Common myeloid progenitor, CD34-positive (primary cell): ENCODE measurements at regions of chr14 and their contacts with region 1.

Region 1: DNA sequence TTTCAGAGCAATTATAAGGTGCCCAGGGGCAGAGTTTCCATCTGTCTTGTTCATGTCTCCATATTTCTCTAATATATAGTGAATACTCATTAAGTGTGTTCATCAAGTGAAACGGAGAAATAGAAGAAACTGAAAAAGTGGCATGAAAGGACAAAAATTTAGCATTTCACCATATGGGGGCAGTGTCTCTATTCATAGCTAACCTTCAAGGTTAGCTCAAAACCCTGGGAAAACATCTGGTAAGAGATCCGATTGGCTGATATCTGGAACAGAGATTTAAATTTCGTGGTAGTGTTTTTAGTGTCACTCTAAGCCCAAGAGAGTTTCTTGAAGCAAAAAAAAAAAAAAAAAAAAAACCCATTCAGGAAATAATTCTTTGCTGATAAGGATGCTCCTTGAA is 367.5 kb downstream of the DAD1 start:
- DNase-seq: peak; percentile 56 to 80 (median 77)
- H3K4me3 ChIP-seq: no peak overlapping the region
- H3K27ac ChIP-seq: no peak overlapping the region
- H3K4me1 ChIP-seq: peaks cover 2 to 17% (median 7%) of the 10 kb centered on the region in 4 experiments
- H3K27me3 ChIP-seq: no peaks in the 10 kb centered on the region

Region 2: GRCh38 chr14:21933681-21934080 is 287.8 kb before region 1 on chr14:
- CTCF ChIA-PET with region 1: no interaction called
- POLR2A ChIA-PET with region 1: no interaction called
- DNase-seq: peak; percentile 43 to 56 (median 49)
- H3K4me3 ChIP-seq: no peak overlapping the region
- H3K27ac ChIP-seq: no peak overlapping the region
- H3K4me1 ChIP-seq: peaks cover 0 to 13% (median 5%) of the 10 kb centered on the region in 4 experiments
- H3K27me3 ChIP-seq: no peaks in the 10 kb centered on the region

Region 3: DNA sequence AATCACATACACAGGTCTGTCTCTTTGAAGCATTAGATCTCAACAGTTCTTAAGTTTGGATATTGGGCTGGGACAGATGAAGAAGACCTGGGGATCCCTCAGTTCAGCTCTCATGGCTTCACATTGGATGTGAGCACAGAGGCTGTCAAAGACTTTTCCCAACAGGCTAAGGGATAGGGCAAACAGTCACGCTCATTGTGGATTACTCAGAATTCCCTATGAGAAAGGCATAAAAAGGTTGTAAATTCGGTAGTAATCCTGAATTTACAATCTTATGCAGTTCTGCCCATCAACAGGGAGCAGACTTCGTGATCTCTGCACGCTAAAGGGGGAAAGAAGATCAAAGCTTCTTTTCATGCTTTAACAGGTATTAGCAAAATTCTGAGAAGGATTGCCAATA is 80.9 kb before region 1 on chr14:
- CTCF ChIA-PET with region 1: no interaction called
- POLR2A ChIA-PET with region 1: no interaction called
- DNase-seq: no peak
- H3K4me3 ChIP-seq: no peak overlapping the region
- H3K27ac ChIP-seq: no peak overlapping the region
- H3K4me1 ChIP-seq: no peaks in the 10 kb centered on the region
- H3K27me3 ChIP-seq: peaks cover 0 to 1% (median 0%) of the 10 kb centered on the region in 5 experiments

Region 4: GRCh38 chr14:22210906-22211305 is 10.6 kb before region 1 on chr14:
- CTCF ChIA-PET with region 1: interaction called, 13 read pairs
- POLR2A ChIA-PET with region 1: no interaction called
- DNase-seq: no peak
- H3K4me3 ChIP-seq: no peak overlapping the region
- H3K27ac ChIP-seq: no peak overlapping the region
- H3K4me1 ChIP-seq: no peaks in the 10 kb centered on the region
- H3K27me3 ChIP-seq: peaks cover 0 to 1% (median 0%) of the 10 kb centered on the region in 5 experiments

Region 5: GRCh38 chr14:22265319-22266137 is 44.0 kb after region 1 on chr14:
- CTCF ChIA-PET with region 1: interaction called, 23 read pairs
- POLR2A ChIA-PET with region 1: interaction called, 3 read pairs
- DNase-seq: peak; percentile 41 to 62 (median 60)
- H3K4me3 ChIP-seq: peak overlapping the region in 1 of 7 experiments; percentile 3
- H3K27ac ChIP-seq: no peak overlapping the region
- H3K4me1 ChIP-seq: peaks cover 3 to 19% (median 7%) of the 10 kb centered on the region in 4 experiments
- H3K27me3 ChIP-seq: no peaks in the 10 kb centered on the region

Region 6: DNA sequence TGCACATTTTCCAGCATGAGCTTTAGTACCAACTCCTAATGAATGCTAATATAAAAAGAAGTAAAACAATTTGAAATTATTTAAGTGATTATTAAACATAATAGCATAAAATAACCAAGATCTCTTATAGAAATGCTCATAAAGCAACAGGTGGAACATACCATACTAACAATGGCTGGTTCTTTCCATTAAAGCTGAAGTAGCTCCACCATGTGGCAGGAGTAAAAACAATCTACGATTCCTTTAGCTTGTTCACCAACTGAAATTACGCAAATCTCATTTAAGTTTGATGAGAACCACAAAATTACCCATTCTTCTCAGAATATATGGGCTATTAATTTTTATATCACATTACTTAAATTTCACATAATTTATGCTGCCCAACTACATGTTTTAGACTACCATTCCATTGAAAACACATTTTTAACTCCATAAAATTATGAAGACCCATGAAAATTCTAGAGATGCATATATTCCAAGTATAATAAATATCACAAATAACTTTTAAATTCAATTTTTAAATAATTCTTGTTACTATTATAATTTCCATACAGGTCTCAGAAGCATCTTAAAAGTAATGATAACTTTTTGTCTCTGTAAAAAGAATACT is 153.9 kb after region 1 on chr14:
- CTCF ChIA-PET with region 1: interaction called, 52 read pairs
- POLR2A ChIA-PET with region 1: no interaction called
- DNase-seq: peak; percentile 61 to 84 (median 82)
- H3K4me3 ChIP-seq: no peak overlapping the region
- H3K27ac ChIP-seq: no peak overlapping the region
- H3K4me1 ChIP-seq: no peaks in the 10 kb centered on the region
- H3K27me3 ChIP-seq: peaks cover 0 to 2% (median 0%) of the 10 kb centered on the region in 5 experiments